HCT116 (cell line): ENCODE measurements at regions of chr17 and their contacts with region 1.

Region 1: GRCh38 chr17:67993596-67994361 is 2.5 kb downstream of the C17orf58 start:
- DNase-seq: peak; percentile 81
- ATAC-seq: peak; percentile 82
- H3K4me3 ChIP-seq: peak overlapping the region; percentile 74 to 98
- H3K27ac ChIP-seq: peak overlapping the region; percentile 99
- H3K4me1 ChIP-seq: peaks cover 9 to 27% of the 10 kb centered on the region in 2 experiments
- H3K27me3 ChIP-seq: no peaks in the 10 kb centered on the region
- CTCF ChIP-seq: no peak
- POLR2A ChIP-seq: peak; percentile 70
- RAD21 ChIP-seq: no peak

Region 2: GRCh38 chr17:67629971-67630320 is 363.8 kb before region 1 on chr17:
- CTCF ChIA-PET with region 1: no interaction called
- POLR2A ChIA-PET with region 1: no interaction called
- RAD21 ChIA-PET with region 1: no interaction called
- intact Hi-C with region 1: no loop called
- DNase-seq: peak; percentile 23
- ATAC-seq: peak; percentile 76
- H3K4me3 ChIP-seq: no peak overlapping the region
- H3K27ac ChIP-seq: no peak overlapping the region
- H3K4me1 ChIP-seq: no peaks in the 10 kb centered on the region
- H3K27me3 ChIP-seq: no peaks in the 10 kb centered on the region
- CTCF ChIP-seq: peak; percentile 37 to 55 (median 52); a peak in 5 of 6 replicates
- POLR2A ChIP-seq: no peak
- RAD21 ChIP-seq: peak; percentile 65

Region 3: GRCh38 chr17:67974598-67975066 is 19.1 kb before region 1 on chr17:
- CTCF ChIA-PET with region 1: no interaction called
- POLR2A ChIA-PET with region 1: no interaction called
- RAD21 ChIA-PET with region 1: no interaction called
- intact Hi-C with region 1: no loop called
- DNase-seq: no peak
- ATAC-seq: peak; percentile 44; the same call in 1 of the 2 replicates
- H3K4me3 ChIP-seq: no peak overlapping the region
- H3K27ac ChIP-seq: no peak overlapping the region
- H3K4me1 ChIP-seq: no peaks in the 10 kb centered on the region
- H3K27me3 ChIP-seq: no peaks in the 10 kb centered on the region
- CTCF ChIP-seq: no peak
- POLR2A ChIP-seq: no peak
- RAD21 ChIP-seq: no peak

Region 4: DNA sequence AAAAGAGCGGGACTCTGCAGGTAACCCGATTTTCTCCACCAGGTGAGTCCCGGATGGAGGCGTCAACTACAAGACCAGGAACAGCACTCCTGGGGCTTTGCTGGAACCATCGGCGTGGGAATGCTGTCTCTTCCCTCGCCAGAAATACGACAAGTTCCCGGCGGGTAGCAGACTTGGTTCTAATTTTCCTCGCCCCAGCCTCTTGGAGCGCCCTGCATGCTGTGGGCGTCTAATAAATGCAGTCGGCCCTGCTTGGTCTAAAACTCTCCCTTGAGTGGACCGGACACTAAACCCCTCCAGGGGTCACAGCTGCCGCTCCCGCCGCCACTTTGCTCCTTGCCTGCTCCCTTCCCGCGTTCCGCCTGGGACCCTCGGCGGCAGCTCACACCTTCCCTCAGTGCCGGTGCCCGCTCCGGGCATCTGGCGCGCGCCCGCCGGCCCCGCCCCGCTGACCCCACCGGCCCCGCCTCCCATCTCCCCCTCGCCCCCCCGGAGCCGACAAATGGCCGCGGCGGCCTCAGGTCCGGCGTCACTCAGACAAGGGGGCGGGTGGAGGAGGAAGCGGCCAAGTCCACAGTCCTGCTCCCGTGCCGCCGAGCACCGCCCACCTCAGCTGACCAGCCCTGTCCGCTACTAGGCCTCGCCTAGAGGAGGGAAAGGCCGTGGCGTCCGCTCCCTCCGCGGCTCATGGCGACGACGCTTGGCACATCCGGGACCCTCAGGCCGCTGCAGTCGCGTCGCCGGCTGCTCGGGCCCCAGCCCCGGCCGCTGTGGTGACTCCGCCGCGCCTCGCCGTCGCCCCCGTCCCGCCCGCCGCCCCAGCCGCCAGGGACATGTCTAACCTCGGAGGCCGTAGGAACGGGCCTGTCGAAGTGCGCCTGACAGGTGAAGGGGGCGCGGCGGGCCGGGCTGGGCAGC is 107.6 kb after region 1 on chr17:
- CTCF ChIA-PET with region 1: no interaction called
- POLR2A ChIA-PET with region 1: no interaction called
- RAD21 ChIA-PET with region 1: no interaction called
- intact Hi-C with region 1: loop called (anchors 5 kb)
- DNase-seq: peak; percentile 92
- ATAC-seq: peak; percentile 98
- H3K4me3 ChIP-seq: peak overlapping the region; percentile 76
- H3K27ac ChIP-seq: peak overlapping the region; percentile 77
- H3K4me1 ChIP-seq: peaks cover 11 to 26% of the 10 kb centered on the region in 2 experiments
- H3K27me3 ChIP-seq: no peaks in the 10 kb centered on the region
- CTCF ChIP-seq: no peak
- POLR2A ChIP-seq: peak; percentile 36
- RAD21 ChIP-seq: no peak